ENCODE measurements at regions of chr1 and their contacts with region 1.

Region 1: DNA sequence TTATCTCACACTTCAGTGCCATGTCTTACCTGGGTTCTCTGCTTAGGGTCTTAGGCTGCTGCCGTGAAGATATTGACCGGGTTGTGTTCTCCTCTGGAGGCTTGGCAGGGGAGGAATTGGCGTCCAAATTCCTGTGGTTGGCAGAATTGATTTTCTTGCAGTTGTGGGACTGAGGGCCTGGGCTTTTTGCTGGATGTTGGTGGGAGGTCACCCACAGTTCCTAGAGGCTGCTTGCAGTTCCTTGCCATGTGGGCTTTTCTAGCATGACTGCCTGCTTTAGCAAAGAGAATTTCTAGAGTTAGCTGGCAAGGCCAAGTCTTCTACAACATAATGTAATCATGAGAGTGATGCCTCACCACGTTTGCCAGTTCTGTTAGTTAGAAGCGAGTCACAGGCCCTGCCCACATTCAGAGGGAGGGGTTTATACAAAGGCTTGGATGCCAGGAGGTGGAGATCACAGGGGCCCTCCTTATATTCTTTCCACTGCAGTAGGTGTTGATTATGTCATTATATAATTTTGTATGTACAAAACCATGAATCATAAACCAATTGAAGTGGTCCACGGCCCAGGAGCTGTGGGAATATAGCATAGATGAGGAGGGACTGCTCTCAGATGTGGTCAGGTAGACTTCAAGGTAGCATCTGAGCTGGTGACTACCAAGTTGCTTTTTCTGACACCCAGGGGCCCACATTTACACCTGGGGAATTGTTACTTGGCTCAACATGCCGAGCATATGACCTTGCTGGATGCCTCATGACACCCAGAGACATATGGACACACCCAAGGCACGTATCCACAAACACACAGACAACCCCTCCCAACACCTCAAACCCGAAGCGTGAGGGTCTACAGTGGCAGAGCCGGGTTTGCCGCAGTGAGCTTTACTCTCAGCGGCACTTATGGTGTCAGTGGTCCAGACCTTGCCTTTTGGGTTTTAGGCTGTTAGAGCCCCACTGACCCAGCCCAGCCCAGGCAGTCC is 6.7 kb downstream of the UBL4B start:
- DNase-seq: no peak
- H3K4me3 ChIP-seq: no peak overlapping the region
- H3K27ac ChIP-seq: no peak overlapping the region
- H3K4me1 ChIP-seq: peaks cover 0 to 6% of the 10 kb centered on the region in 2 experiments; a peak in 1 of 4 replicates
- H3K27me3 ChIP-seq: no peaks in the 10 kb centered on the region; the same call in 1 of the 2 replicates
- CTCF ChIP-seq: no peak
- EP300 ChIP-seq: no peak
- RAD21 ChIP-seq: no peak

Region 2: GRCh38 chr1:110135268-110136065 is 16.5 kb after region 1 on chr1:
- CTCF ChIA-PET with region 1: interaction called, 23 read pairs
- POLR2A ChIA-PET with region 1: no interaction called
- DNase-seq: no peak
- H3K4me3 ChIP-seq: no peak overlapping the region
- H3K27ac ChIP-seq: no peak overlapping the region
- H3K4me1 ChIP-seq: peaks cover 0 to 33% of the 10 kb centered on the region in 2 experiments; a peak in 1 of 4 replicates
- H3K27me3 ChIP-seq: peaks cover 20% of the 10 kb centered on the region; the same call in 1 of the 2 replicates
- CTCF ChIP-seq: no peak
- EP300 ChIP-seq: no peak
- RAD21 ChIP-seq: no peak

Region 3: GRCh38 chr1:110170766-110171733 is 52.1 kb after region 1 on chr1:
- CTCF ChIA-PET with region 1: interaction called, 10 read pairs
- POLR2A ChIA-PET with region 1: no interaction called
- DNase-seq: peak; percentile 88
- H3K4me3 ChIP-seq: no peak overlapping the region
- H3K27ac ChIP-seq: peak overlapping the region in 1 of 2 experiments; percentile 96; a peak in 2 of 4 replicates
- H3K4me1 ChIP-seq: peaks cover 0 to 72% of the 10 kb centered on the region in 2 experiments; a peak in 2 of 4 replicates
- H3K27me3 ChIP-seq: no peaks in the 10 kb centered on the region
- CTCF ChIP-seq: no peak
- EP300 ChIP-seq: peak in 1 of 2 experiments; percentile 95; a peak in 2 of 4 replicates
- RAD21 ChIP-seq: peak; percentile 17